Mammary epithelial cell (primary cell): ENCODE measurements at regions of chr3 and their contacts with region 1.

Region 1: DNA sequence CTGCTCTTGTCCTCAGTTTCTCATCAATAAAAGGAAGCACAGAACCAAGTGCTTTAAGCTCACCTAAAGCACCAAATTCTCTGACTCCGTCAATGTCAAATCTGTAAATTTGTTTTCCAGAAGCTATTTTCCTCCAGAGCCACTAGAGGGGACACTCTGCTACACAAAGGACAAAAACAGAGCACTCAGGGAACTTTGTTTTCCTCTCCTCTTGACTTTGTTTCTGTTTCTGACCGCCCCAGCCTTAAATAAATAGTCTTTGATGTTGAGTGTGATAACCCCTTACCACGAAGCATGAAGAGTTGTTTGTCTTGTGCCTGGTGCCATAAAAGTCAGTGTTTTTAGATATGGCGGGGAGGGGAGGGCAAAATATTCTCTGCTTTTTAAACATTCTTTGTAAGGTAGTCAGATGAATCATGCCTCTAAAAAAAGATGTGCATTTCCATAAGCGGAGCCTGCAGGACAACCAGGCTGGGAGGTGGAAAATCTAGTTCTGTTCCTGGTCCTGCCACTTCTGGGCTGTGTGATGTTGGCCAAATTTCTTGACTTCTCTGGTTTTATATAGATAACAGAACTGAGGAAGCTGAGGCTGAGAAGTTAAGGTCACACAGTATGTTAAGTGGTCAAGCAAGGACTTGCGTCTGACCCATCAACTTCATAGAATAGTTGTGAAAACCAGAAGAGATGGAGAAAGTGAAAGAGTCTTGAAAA is 7.3 kb upstream of the ZBTB38 start:
- DNase-seq: peak; percentile 70
- H3K4me3 ChIP-seq: peak overlapping the region in 1 of 3 experiments; percentile 17
- H3K27ac ChIP-seq: no peak overlapping the region
- H3K4me1 ChIP-seq: peaks cover 25% of the 10 kb centered on the region
- H3K27me3 ChIP-seq: no peaks in the 10 kb centered on the region
- CTCF ChIP-seq: peak; percentile 70 to 85

Region 2: DNA sequence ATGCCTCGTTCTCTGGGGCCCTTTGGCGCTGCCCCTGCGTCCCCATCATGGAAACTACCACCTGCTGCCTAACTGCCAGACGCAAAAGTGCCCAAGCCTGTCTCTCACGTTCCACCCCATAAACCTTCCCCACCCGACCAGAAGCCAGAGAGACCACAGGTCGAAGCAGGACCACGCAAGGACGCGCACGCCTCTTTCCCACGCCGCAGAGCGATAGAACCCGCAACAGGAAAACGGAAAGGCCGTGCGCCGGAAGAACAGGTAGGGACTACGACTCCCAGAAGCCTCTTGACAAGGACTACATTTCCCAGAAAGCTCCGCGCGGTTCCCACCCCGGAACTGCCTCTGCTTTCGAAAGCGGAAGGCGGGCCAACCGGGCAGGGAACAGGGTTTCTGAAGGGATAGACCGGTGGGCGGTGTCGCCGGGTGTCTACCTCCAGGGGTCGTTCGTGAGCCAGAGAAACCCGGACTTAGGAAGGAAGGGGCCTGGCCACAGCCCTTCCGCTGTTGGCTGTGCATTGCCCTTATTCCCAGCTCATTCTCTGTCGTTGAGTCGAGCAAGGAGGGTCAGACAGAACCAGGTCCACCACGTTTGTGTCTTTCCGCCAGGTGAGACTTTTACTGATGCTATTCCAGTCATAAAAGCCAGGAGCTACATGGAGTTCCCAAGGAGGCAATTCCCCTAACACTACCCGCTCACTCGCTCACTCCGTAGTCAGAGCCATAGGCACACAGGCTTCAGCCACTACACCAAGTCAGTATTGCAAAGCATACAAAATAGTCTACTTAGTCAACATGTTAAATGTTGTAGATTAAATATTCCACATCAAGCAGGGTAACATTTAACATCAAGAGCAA is 49.3 kb before region 1 on chr3:
- CTCF ChIA-PET with region 1: interaction called, 6 read pairs
- dilution Hi-C with region 1: no loop called
- in situ Hi-C with region 1: no loop called
- intact Hi-C with region 1: loop called (anchors 1 kb)
- DNase-seq: peak; percentile 94
- H3K4me3 ChIP-seq: peak overlapping the region; percentile 75 to 89 (median 78)
- H3K27ac ChIP-seq: peak overlapping the region; percentile 59
- H3K4me1 ChIP-seq: peaks cover 12% of the 10 kb centered on the region
- H3K27me3 ChIP-seq: no peaks in the 10 kb centered on the region
- CTCF ChIP-seq: peak; percentile 65 to 72

Region 3: GRCh38 chr3:141392897-141393734 is 32.1 kb after region 1 on chr3:
- CTCF ChIA-PET with region 1: no interaction called
- dilution Hi-C with region 1: no loop called
- in situ Hi-C with region 1: no loop called
- intact Hi-C with region 1: no loop called
- DNase-seq: no peak
- H3K4me3 ChIP-seq: no peak overlapping the region
- H3K27ac ChIP-seq: no peak overlapping the region
- H3K4me1 ChIP-seq: peaks cover 9% of the 10 kb centered on the region
- H3K27me3 ChIP-seq: no peaks in the 10 kb centered on the region
- CTCF ChIP-seq: no peak

Region 4: GRCh38 chr3:141553055-141553454 is 192.0 kb after region 1 on chr3:
- CTCF ChIA-PET with region 1: no interaction called
- dilution Hi-C with region 1: no loop called
- in situ Hi-C with region 1: no loop called
- intact Hi-C with region 1: loop called (anchors 10 kb)
- DNase-seq: no peak
- H3K4me3 ChIP-seq: no peak overlapping the region
- H3K27ac ChIP-seq: no peak overlapping the region
- H3K4me1 ChIP-seq: no peaks in the 10 kb centered on the region
- H3K27me3 ChIP-seq: no peaks in the 10 kb centered on the region
- CTCF ChIP-seq: no peak